ENCODE measurements at regions of chr10 and their contacts with region 1.

Region 1: GRCh38 chr10:83153714-83154113 is 985.6 kb upstream of the GHITM start:
- DNase-seq: no peak
- H3K4me3 ChIP-seq: no peak overlapping the region
- H3K27ac ChIP-seq: no peak overlapping the region
- H3K4me1 ChIP-seq: peaks cover 0 to 4% (median 0%) of the 10 kb centered on the region in 4 experiments; a peak in 2 of 7 replicates
- H3K27me3 ChIP-seq: no peaks in the 10 kb centered on the region
- CTCF ChIP-seq: no peak
- EP300 ChIP-seq: no peak
- POLR2A ChIP-seq: no peak
- RAD21 ChIP-seq: no peak

Region 2: GRCh38 chr10:83045731-83046130 is 108.0 kb before region 1 on chr10:
- CTCF ChIA-PET with region 1: no interaction called
- POLR2A ChIA-PET with region 1: no interaction called
- DNase-seq: no peak
- H3K4me3 ChIP-seq: no peak overlapping the region
- H3K27ac ChIP-seq: no peak overlapping the region
- H3K4me1 ChIP-seq: no peaks in the 10 kb centered on the region
- H3K27me3 ChIP-seq: no peaks in the 10 kb centered on the region
- CTCF ChIP-seq: no peak
- EP300 ChIP-seq: no peak
- POLR2A ChIP-seq: no peak
- RAD21 ChIP-seq: no peak

Region 3: GRCh38 chr10:83142074-83142563 is 11.6 kb before region 1 on chr10:
- CTCF ChIA-PET with region 1: no interaction called
- POLR2A ChIA-PET with region 1: no interaction called
- DNase-seq: no peak
- H3K4me3 ChIP-seq: no peak overlapping the region
- H3K27ac ChIP-seq: no peak overlapping the region
- H3K4me1 ChIP-seq: no peaks in the 10 kb centered on the region
- H3K27me3 ChIP-seq: no peaks in the 10 kb centered on the region
- CTCF ChIP-seq: no peak
- EP300 ChIP-seq: no peak
- POLR2A ChIP-seq: no peak
- RAD21 ChIP-seq: no peak

Region 4: GRCh38 chr10:83166372-83166771 is 12.7 kb after region 1 on chr10:
- CTCF ChIA-PET with region 1: interaction called, 12 read pairs
- POLR2A ChIA-PET with region 1: no interaction called
- DNase-seq: peak; percentile 59 to 70
- H3K4me3 ChIP-seq: no peak overlapping the region
- H3K27ac ChIP-seq: no peak overlapping the region
- H3K4me1 ChIP-seq: no peaks in the 10 kb centered on the region
- H3K27me3 ChIP-seq: no peaks in the 10 kb centered on the region; a peak in 1 of 7 replicates
- CTCF ChIP-seq: peak; percentile 57 to 84 (median 65)
- EP300 ChIP-seq: no peak
- POLR2A ChIP-seq: no peak
- RAD21 ChIP-seq: peak; percentile 72 to 76

Region 5: GRCh38 chr10:83182076-83182475 is 28.4 kb after region 1 on chr10:
- CTCF ChIA-PET with region 1: no interaction called
- POLR2A ChIA-PET with region 1: no interaction called
- DNase-seq: no peak
- H3K4me3 ChIP-seq: no peak overlapping the region
- H3K27ac ChIP-seq: no peak overlapping the region
- H3K4me1 ChIP-seq: no peaks in the 10 kb centered on the region
- H3K27me3 ChIP-seq: peaks cover 0 to 1% (median 0%) of the 10 kb centered on the region in 4 experiments; a peak in 1 of 7 replicates
- CTCF ChIP-seq: no peak
- EP300 ChIP-seq: no peak
- POLR2A ChIP-seq: no peak
- RAD21 ChIP-seq: no peak

Measured in H1 (cell line).